Activated CD4-positive, alpha-beta T cell treated with anti-CD3 and anti-CD28 coated beads for 36 hours (primary cell): ENCODE measurements at regions of chr16 and their contacts with region 1.

Region 1: DNA sequence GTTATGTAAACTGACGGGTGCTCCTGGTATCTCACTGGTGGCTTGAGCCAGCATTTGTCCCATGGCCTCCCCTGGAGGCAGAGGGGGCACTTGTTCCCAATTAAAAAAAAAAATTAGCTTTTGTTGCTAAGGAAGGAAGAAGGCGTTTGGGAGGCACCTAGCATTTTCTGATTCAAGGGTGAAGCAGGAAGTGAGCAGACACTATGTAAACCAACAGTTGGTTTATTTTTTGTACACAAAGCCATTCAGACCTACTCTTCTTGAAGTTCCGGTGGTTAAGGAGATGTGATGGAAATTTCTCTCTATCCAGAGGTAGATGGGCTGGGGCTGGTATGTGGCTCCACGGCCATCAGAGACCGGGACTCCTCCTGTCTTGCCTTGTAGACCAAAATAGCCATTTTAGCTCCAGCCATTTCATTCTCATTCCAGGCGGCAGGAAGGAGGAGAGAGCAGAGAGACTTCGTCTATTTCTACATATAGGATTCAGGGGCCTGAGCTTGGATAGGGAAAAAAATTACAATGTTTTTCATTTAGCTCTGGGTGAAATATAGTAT is 103.0 kb downstream of the SNX29 start:
- DNase-seq: peak; percentile 13
- ATAC-seq: no peak
- H3K4me3 Mint-ChIP-seq: peak overlapping the region; percentile 53
- H3K27ac Mint-ChIP-seq: peak overlapping the region; percentile 97
- H3K4me1 Mint-ChIP-seq: peaks cover 76% of the 10 kb centered on the region
- H3K27me3 Mint-ChIP-seq: no peaks in the 10 kb centered on the region

Region 2: DNA sequence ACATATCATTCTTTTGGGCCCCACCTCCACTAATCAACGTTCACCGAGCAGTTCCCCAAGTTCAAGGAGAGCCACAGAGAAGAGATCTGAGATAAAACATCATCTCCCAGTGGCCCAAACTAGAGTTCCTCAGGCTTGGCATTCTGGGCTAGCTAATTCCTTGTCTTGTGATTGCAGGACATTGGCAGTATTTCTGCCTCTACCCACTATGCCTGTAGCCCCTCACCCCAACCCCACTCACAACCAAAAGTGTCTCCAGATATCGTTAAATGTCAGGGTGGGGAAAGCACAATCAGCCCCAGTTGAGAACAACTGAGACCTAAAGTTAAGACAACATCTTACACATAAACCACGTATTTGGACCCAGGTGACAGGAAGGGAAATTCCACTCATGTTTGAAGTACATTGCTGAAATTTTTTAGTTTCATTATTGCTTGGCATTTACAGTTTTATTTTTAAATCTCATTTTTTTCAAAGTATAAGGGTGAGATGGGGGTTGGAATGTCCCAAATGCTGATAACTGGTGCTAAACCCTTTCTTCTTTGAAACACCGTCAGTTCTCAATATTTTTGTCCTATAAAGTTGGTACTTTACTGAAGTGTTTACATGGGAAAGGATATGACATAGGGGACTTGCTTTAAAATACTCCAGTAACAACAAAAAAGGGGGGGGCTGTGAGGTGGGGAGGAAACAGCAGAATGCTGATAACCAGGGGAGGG is 296.0 kb before region 1 on chr16:
- CTCF ChIA-PET with region 1: no interaction called
- POLR2A ChIA-PET with region 1: interaction called, 3 read pairs
- intact Hi-C with region 1: loop called in 1 of 2 experiments (anchors 1 kb)
- DNase-seq: peak; percentile 65
- ATAC-seq: peak; percentile 80
- H3K4me3 Mint-ChIP-seq: peak overlapping the region; percentile 74
- H3K27ac Mint-ChIP-seq: peak overlapping the region; percentile 97
- H3K4me1 Mint-ChIP-seq: peaks cover 74% of the 10 kb centered on the region
- H3K27me3 Mint-ChIP-seq: no peaks in the 10 kb centered on the region

Region 3: GRCh38 chr16:11977376-11978041 is 102.0 kb before region 1 on chr16:
- CTCF ChIA-PET with region 1: no interaction called
- POLR2A ChIA-PET with region 1: no interaction called
- intact Hi-C with region 1: loop called in 1 of 2 experiments (anchors 2 kb)
- DNase-seq: no peak
- ATAC-seq: no peak
- H3K4me3 Mint-ChIP-seq: peak overlapping the region; percentile 88
- H3K27ac Mint-ChIP-seq: peak overlapping the region; percentile 30
- H3K4me1 Mint-ChIP-seq: peaks cover 39% of the 10 kb centered on the region
- H3K27me3 Mint-ChIP-seq: no peaks in the 10 kb centered on the region

Region 4: DNA sequence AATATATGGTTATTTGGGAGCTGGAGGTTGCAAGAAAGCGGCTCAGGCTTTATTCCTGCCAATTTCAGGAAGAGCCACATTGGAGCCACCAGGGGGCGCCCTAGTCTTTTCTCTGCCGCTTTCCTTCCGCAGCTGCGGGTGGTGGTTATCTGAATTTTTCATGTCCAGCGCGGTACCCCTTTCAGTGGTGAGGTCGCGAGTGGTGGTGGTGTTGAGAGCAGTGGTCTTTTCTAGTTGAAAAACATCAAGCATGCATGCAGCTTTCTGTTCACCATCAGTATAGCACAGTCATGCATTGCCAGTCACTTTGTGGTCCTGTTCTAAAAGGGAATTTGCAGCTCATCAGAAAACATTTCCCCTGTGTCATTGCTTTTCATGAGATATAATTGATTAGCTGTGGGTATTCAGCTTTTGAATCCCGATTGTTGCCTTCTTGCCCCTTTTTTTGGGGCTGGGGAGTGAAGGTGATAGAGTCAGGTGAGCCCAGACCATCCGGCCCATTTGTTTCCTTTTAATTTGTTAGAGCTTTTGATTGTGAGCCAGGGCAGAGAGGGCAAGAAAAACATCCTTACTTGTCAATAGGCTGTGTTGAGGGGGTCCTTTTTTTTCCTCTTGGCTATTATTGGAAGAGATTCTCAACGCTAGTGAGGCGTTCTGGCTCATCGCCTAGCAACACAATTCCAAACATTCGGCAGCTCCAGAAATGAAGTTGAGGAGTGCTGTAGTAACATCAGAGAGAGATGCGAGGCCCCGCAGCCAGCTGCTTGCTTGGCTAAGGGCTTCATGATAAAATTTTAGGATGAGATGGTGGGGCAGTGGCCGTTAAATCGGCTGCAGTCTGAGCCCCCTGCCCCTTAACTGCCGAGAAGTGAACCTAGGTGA is 16.0 kb after region 1 on chr16:
- CTCF ChIA-PET with region 1: interaction called, 40 read pairs
- POLR2A ChIA-PET with region 1: no interaction called
- intact Hi-C with region 1: no loop called
- DNase-seq: peak; percentile 83
- ATAC-seq: peak; percentile 44
- H3K4me3 Mint-ChIP-seq: peak overlapping the region; percentile 19
- H3K27ac Mint-ChIP-seq: peak overlapping the region; percentile 28
- H3K4me1 Mint-ChIP-seq: peaks cover 22% of the 10 kb centered on the region
- H3K27me3 Mint-ChIP-seq: no peaks in the 10 kb centered on the region

Region 5: DNA sequence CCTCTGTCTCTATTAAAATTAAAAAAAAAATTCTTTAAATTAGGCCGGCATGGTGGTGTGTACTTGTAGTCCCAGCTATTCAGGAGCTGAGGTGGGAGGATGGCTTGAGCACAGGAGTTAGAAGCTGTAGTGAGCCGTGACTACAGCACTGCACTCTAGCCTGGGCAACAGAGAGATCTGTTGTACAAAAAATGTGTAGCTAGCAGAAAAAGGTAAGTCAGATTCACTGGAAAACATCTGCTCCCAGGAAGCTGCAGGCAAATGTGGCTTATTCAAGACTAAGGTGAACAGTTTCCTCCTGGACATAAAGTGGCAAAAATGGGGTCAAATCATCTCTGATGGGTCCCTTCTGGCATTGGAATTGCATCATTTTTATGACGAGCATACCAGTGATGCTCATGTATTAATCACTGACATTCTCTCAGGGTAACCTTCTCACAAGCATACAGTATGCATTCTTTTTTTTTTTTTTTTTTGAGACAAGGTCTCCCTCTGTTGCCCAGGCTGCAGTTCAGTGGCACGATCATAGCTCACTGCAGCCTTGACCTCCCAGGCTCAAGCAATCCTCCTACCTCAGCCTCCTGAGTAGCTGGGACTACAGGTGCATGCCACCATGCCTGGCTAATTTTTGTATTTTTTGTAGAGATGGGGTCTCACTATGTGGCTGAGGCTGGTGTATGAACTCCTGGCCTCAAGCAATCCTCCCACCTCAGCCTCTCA is 675.5 kb after region 1 on chr16:
- CTCF ChIA-PET with region 1: no interaction called
- POLR2A ChIA-PET with region 1: no interaction called
- intact Hi-C with region 1: loop called in 1 of 2 experiments (anchors 2 kb)
- DNase-seq: no peak
- ATAC-seq: no peak
- H3K4me3 Mint-ChIP-seq: no peak overlapping the region
- H3K27ac Mint-ChIP-seq: no peak overlapping the region
- H3K4me1 Mint-ChIP-seq: peaks cover 23% of the 10 kb centered on the region
- H3K27me3 Mint-ChIP-seq: no peaks in the 10 kb centered on the region